ENCODE measurements at regions of chr21 and their contacts with region 1.

Region 1: GRCh38 chr21:44338971-44339910 is at the start of gene CFAP410:
- DNase-seq: peak; percentile 88 to 93
- ATAC-seq: peak; percentile 90 to 92
- H3K4me3 ChIP-seq: peak within 1 kb of the TSS; percentile 80 to 96 (median 88)
- H3K27ac ChIP-seq: peak within 1 kb of the TSS; percentile 83 to 98 (median 96)
- H3K4me1 ChIP-seq: peaks cover 9 to 16% of the 10 kb centered on the region in 2 donors
- H3K27me3 ChIP-seq: no peaks in the 10 kb centered on the region
- CTCF ChIP-seq: peak in 1 of 5 experiments; percentile 31
- POLR2A ChIP-seq: peak; percentile 84 to 94
- total RNA-seq, gene CFAP410: 10.6 to 23.0 (median 20.0) TPM

Region 2: GRCh38 chr21:43789276-43790009 is 549.8 kb before region 1 on chr21 and contains the start of gene RRP1:
- in situ Hi-C with region 1: no loop called
- intact Hi-C with region 1: loop called (anchors 5 kb)
- DNase-seq: peak; percentile 75 to 86
- ATAC-seq: peak; percentile 91 to 94
- H3K4me3 ChIP-seq: peak within 1 kb of the TSS; percentile 70 to 78 (median 74)
- H3K27ac ChIP-seq: peak within 1 kb of the TSS; percentile 90 to 96 (median 92)
- H3K4me1 ChIP-seq: peaks cover 8 to 13% of the 10 kb centered on the region in 2 donors
- H3K27me3 ChIP-seq: no peaks in the 10 kb centered on the region
- CTCF ChIP-seq: peak in 4 of 5 experiments; percentile 100
- POLR2A ChIP-seq: peak; percentile 88 to 90
- total RNA-seq, gene RRP1: 17.5 to 32.0 (median 25.1) TPM

Region 3: DNA sequence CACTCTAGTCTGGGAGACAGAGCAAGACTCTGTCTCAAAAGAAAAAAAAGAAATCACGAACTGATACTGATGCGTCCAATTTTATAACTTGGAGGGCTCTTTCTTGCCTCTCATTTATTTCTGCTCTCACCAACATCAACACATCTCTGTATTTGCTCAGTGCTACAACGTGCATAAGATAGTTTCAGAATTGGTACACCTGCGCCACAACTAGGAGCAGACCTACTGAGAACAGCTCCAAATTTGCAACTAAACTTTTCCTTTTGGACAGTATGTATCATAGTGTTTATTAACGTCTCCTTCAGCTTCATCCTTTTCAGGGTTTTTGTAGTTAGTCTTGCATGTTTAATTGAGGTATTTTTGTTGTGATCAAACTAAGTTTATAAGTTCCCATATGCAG is 299.4 kb before region 1 on chr21:
- in situ Hi-C with region 1: no loop called
- intact Hi-C with region 1: no loop called
- DNase-seq: no peak
- ATAC-seq: no peak
- H3K4me3 ChIP-seq: no peak overlapping the region
- H3K27ac ChIP-seq: no peak overlapping the region
- H3K4me1 ChIP-seq: no peaks in the 10 kb centered on the region
- H3K27me3 ChIP-seq: no peaks in the 10 kb centered on the region
- CTCF ChIP-seq: no peak
- POLR2A ChIP-seq: no peak

Region 4: GRCh38 chr21:44199465-44199864 is 139.8 kb before region 1 on chr21:
- in situ Hi-C with region 1: no loop called
- intact Hi-C with region 1: no loop called
- DNase-seq: no peak
- ATAC-seq: no peak
- H3K4me3 ChIP-seq: no peak overlapping the region
- H3K27ac ChIP-seq: no peak overlapping the region
- H3K4me1 ChIP-seq: no peaks in the 10 kb centered on the region
- H3K27me3 ChIP-seq: no peaks in the 10 kb centered on the region
- CTCF ChIP-seq: no peak
- POLR2A ChIP-seq: no peak

Region 5: GRCh38 chr21:44299458-44300261 is 39.6 kb before region 1 on chr21 and contains the start of gene PFKL:
- in situ Hi-C with region 1: no loop called
- intact Hi-C with region 1: loop called (anchors 2 kb)
- DNase-seq: no peak
- ATAC-seq: peak; percentile 78 to 80
- H3K4me3 ChIP-seq: peak within 1 kb of the TSS; percentile 63 to 73 (median 67)
- H3K27ac ChIP-seq: peak within 1 kb of the TSS; percentile 70 to 76 (median 72)
- H3K4me1 ChIP-seq: peaks cover 14 to 21% of the 10 kb centered on the region in 2 donors
- H3K27me3 ChIP-seq: peaks cover 0 to 6% (median 0%) of the 10 kb centered on the region in 3 donors
- CTCF ChIP-seq: no peak
- POLR2A ChIP-seq: peak; percentile 45 to 46
- total RNA-seq, gene PFKL: 11.9 to 20.6 (median 16.8) TPM

Region 6: GRCh38 chr21:44817506-44817880 is 478.3 kb after region 1 on chr21:
- in situ Hi-C with region 1: no loop called
- intact Hi-C with region 1: loop called (anchors 5 kb)
- DNase-seq: peak; percentile 85 to 87
- ATAC-seq: peak; percentile 77 to 78
- H3K4me3 ChIP-seq: peak overlapping the region; percentile 62 to 90 (median 74)
- H3K27ac ChIP-seq: peak overlapping the region; percentile 78 to 91 (median 90)
- H3K4me1 ChIP-seq: peaks cover 9 to 22% of the 10 kb centered on the region in 2 donors
- H3K27me3 ChIP-seq: no peaks in the 10 kb centered on the region
- CTCF ChIP-seq: no peak
- POLR2A ChIP-seq: no peak

Region 7: GRCh38 chr21:46323227-46324128 is 1984.2 kb after region 1 on chr21 and contains the start of gene C21orf58:
- in situ Hi-C with region 1: no loop called
- intact Hi-C with region 1: loop called (anchors 10 kb)
- DNase-seq: peak; percentile 97 to 98
- ATAC-seq: peak; percentile 84 to 87
- H3K4me3 ChIP-seq: peak within 1 kb of the TSS; percentile 87 to 93 (median 88)
- H3K27ac ChIP-seq: peak within 1 kb of the TSS; percentile 96 to 100 (median 98)
- H3K4me1 ChIP-seq: peaks cover 18 to 26% of the 10 kb centered on the region in 2 donors
- H3K27me3 ChIP-seq: no peaks in the 10 kb centered on the region
- CTCF ChIP-seq: no peak
- POLR2A ChIP-seq: no peak
- total RNA-seq, gene C21orf58: 0.44 to 1.6 (median 0.74) TPM

Measured in gastrocnemius medialis (tissue), 4 donors.